Heart left ventricle (tissue), 16 donors: ENCODE measurements at regions of chr9 and their contacts with region 1.

Region 1: GRCh38 chr9:2321523-2322151 is 299.9 kb upstream of the VLDLR start:
- DNase-seq: no peak
- ATAC-seq: peak in 1 of 4 donors; percentile 34
- H3K4me3 ChIP-seq: no peak overlapping the region
- H3K27ac ChIP-seq: no peak overlapping the region
- H3K4me1 ChIP-seq: no peaks in the 10 kb centered on the region
- H3K27me3 ChIP-seq: no peaks in the 10 kb centered on the region
- CTCF ChIP-seq: peak in 9 of 12 donors; percentile 12 to 44 (median 34)
- POLR2A ChIP-seq: no peak

Region 2: GRCh38 chr9:2260354-2261306 is 61.0 kb before region 1 on chr9:
- intact Hi-C with region 1: loop called in 1 of 10 experiments (anchors 10 kb)
- DNase-seq: no peak
- ATAC-seq: peak in 1 of 4 donors; percentile 31
- H3K4me3 ChIP-seq: no peak overlapping the region
- H3K27ac ChIP-seq: no peak overlapping the region
- H3K4me1 ChIP-seq: peaks cover 0 to 11% (median 0%) of the 10 kb centered on the region in 12 donors
- H3K27me3 ChIP-seq: no peaks in the 10 kb centered on the region
- CTCF ChIP-seq: no peak
- POLR2A ChIP-seq: no peak

Region 3: GRCh38 chr9:2281031-2281802 is 40.4 kb before region 1 on chr9:
- intact Hi-C with region 1: loop called in 1 of 10 experiments (anchors 5 kb)
- DNase-seq: no peak
- ATAC-seq: no peak
- H3K4me3 ChIP-seq: no peak overlapping the region
- H3K27ac ChIP-seq: no peak overlapping the region
- H3K4me1 ChIP-seq: no peaks in the 10 kb centered on the region
- H3K27me3 ChIP-seq: no peaks in the 10 kb centered on the region
- CTCF ChIP-seq: no peak
- POLR2A ChIP-seq: no peak

Region 4: GRCh38 chr9:2359821-2360505 is 38.3 kb after region 1 on chr9:
- intact Hi-C with region 1: no loop called
- DNase-seq: no peak
- ATAC-seq: no peak
- H3K4me3 ChIP-seq: no peak overlapping the region
- H3K27ac ChIP-seq: no peak overlapping the region
- H3K4me1 ChIP-seq: no peaks in the 10 kb centered on the region
- H3K27me3 ChIP-seq: no peaks in the 10 kb centered on the region
- CTCF ChIP-seq: no peak
- POLR2A ChIP-seq: no peak

Region 5: DNA sequence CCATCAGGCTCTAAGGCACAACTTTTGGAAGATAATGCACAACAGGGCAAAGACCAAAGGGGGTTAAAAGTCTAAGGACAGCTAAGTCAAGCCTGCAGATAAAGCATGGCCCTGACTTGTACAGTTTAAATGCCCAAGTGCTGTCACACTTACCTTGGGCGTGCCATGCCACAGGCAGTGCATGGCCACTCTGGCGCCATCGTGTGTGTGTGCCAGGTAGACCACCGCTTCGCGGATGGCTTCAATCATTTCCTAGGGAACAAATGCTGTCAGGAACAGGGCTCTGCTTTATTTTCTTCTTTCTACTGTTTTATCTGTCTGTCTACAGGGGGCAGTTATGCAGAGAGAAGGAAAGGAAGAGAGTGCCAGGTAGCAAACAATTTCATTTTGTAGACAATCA is 502.9 kb after region 1 on chr9:
- intact Hi-C with region 1: loop called in 1 of 10 experiments (anchors 10 kb)
- DNase-seq: no peak
- ATAC-seq: peak in 2 of 4 donors; percentile 39 to 53
- H3K4me3 ChIP-seq: no peak overlapping the region
- H3K27ac ChIP-seq: no peak overlapping the region
- H3K4me1 ChIP-seq: no peaks in the 10 kb centered on the region
- H3K27me3 ChIP-seq: no peaks in the 10 kb centered on the region
- CTCF ChIP-seq: peak in 5 of 12 donors; percentile 6 to 42 (median 15)
- POLR2A ChIP-seq: no peak